CD8-positive, alpha-beta T cell (primary cell): ENCODE measurements at regions of chr17 and their contacts with region 1.

Region 1: GRCh38 chr17:49707608-49708514 is at the start of gene SLC35B1:
- DNase-seq: peak; percentile 96 to 100 (median 98)
- ATAC-seq: peak; percentile 97
- H3K4me3 ChIP-seq: peak within 1 kb of the TSS; percentile 87 to 93
- H3K4me3 Mint-ChIP-seq: peak within 1 kb of the TSS; percentile 93
- H3K27ac ChIP-seq: peak within 1 kb of the TSS; percentile 95 to 97
- H3K27ac Mint-ChIP-seq: peak within 1 kb of the TSS; percentile 98
- H3K4me1 ChIP-seq: peaks cover 21% of the 10 kb centered on the region
- H3K4me1 Mint-ChIP-seq: peaks cover 42% of the 10 kb centered on the region
- H3K27me3 ChIP-seq: no peaks in the 10 kb centered on the region
- H3K27me3 Mint-ChIP-seq: no peaks in the 10 kb centered on the region
- CTCF ChIP-seq: peak; percentile 80
- total RNA-seq, gene SLC35B1: 57.7 to 64.2 TPM

Region 2: DNA sequence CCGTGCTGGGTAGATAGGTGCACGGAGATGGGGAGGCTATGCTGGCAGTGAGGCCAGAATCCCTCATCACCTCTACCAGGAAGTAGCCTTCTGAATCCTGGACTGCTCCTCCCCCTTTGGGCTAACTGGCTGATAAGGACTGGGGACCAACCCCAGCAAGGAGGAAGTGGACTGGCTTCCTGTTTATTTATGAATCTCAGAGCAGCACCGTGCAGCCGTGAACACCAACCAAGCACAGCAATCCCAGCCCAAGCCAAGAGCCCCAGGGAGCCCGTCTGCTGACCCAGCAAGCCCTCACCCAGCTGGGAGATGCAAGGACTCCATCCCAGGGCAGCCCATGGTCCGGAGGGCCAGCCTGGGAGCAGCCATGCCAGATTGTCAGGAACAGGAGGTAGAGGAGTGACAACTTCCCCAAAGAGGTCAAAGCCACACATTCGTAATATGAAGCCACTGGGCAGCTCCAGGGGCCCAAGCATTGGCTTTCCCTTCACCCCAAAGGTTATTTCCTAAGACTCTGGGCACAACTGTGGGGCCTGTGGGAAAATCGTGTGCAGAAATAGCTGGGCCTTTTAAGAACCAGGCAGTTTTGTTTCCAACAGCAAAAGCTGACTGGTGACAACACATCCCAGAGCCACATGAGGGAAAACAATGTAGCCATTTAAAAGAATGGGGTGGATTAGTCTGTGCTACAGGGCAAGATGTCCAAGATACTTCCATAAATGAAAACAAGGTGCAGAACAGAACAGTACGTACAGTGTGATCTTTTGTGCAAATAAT is 317.1 kb before region 1 on chr17:
- CTCF ChIA-PET with region 1: no interaction called
- POLR2A ChIA-PET with region 1: no interaction called
- intact Hi-C with region 1: no loop called
- DNase-seq: peak in 2 of 9 experiments; percentile 12 to 51
- ATAC-seq: no peak
- H3K4me3 ChIP-seq: no peak overlapping the region
- H3K4me3 Mint-ChIP-seq: peak overlapping the region; percentile 65
- H3K27ac ChIP-seq: peak overlapping the region in 1 of 2 experiments; percentile 88
- H3K27ac Mint-ChIP-seq: peak overlapping the region; percentile 94
- H3K4me1 ChIP-seq: peaks cover 51% of the 10 kb centered on the region
- H3K4me1 Mint-ChIP-seq: peaks cover 68% of the 10 kb centered on the region
- H3K27me3 ChIP-seq: no peaks in the 10 kb centered on the region
- H3K27me3 Mint-ChIP-seq: no peaks in the 10 kb centered on the region
- CTCF ChIP-seq: no peak

Region 3: DNA sequence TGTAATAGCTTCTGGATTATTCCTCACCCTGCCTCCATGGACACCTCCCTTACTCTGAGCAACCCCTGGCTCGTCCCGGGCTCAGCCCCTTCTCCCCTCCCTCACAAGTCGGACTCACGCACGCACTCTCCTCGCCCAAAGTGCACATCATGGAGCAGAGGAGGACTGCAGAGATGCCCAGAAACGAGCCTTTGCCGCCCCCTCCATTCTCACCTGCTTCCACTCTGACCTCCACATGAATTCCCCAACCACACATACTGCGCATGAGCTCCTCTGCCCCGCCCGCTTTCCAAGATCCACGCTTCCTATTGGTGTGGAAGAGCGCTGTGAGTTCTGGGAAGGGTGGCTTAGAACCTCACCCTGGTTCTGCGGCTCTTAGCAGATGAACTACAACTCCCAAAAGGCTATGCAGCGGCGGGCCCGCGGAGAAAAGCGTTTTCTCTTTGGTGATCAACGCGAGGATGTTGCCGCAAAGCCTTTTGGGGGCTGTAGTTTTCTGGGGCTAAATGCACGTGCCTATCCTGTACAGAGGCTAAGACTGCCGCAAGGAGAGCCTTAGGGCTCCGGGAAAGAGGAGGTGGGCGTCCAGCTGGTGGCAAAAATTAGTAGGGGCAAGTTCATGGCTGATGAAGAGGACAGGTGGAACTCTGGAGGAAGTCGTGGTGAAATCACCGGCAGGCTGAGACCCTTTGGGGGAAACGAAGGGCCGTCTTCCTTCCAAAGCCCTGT is 293.1 kb before region 1 on chr17 and contains the start of gene PHB1:
- CTCF ChIA-PET with region 1: interaction called, 3 read pairs
- POLR2A ChIA-PET with region 1: no interaction called
- intact Hi-C with region 1: loop called (anchors 1 to 2 kb)
- DNase-seq: peak; percentile 86 to 98 (median 94)
- ATAC-seq: peak; percentile 98
- H3K4me3 ChIP-seq: peak within 1 kb of the TSS; percentile 80 to 96
- H3K4me3 Mint-ChIP-seq: peak within 1 kb of the TSS; percentile 99
- H3K27ac ChIP-seq: peak within 1 kb of the TSS; percentile 43 to 61
- H3K27ac Mint-ChIP-seq: peak within 1 kb of the TSS; percentile 93
- H3K4me1 ChIP-seq: peaks cover 12% of the 10 kb centered on the region
- H3K4me1 Mint-ChIP-seq: peaks cover 31% of the 10 kb centered on the region
- H3K27me3 ChIP-seq: no peaks in the 10 kb centered on the region
- H3K27me3 Mint-ChIP-seq: no peaks in the 10 kb centered on the region
- CTCF ChIP-seq: no peak
- total RNA-seq, gene PHB1: 26.3 to 27.0 TPM

Region 4: DNA sequence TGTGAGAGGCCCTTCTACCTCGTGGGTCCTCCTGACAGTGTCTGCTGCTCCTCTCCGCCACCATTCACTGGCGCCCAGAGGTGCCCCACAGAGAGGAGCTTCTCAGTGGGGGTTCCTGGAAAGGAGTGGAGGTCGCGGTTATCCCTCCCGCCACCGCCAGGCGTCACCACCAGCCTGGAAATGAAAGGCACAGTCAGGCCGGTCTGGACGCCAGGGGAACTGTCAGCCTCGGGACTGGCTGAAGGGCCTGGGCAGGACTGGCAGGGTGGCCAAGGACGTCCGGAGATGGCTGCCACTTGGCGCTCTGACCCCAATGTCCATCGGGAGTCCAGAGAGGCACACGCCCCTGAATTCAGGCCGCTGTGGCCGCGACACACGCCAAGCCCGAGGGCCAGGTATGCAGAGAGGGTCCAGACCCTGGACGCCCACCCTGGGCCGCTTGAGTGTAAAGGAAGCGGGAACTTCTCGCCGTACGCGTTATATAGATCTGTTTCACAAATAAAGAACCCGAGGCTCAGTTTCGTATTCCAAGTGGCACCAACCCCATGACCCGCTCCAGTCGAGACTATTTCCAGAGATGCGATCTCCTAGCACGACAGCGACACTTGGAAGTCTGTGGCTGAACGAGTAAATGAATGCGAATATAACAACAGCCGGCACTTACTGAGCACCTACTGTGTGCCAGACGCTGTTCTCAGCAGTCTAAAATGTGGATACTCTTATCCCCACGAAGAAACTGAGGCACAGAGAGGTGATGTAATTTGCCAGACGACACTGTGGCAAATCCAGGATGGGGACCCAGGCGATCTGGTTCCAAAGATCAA is 139.8 kb before region 1 on chr17:
- CTCF ChIA-PET with region 1: interaction called, 542 read pairs
- POLR2A ChIA-PET with region 1: interaction called, 4 read pairs
- intact Hi-C with region 1: loop called in 1 of 2 experiments (anchors 1 kb)
- DNase-seq: peak; percentile 69 to 91 (median 82)
- ATAC-seq: peak; percentile 59
- H3K4me3 ChIP-seq: peak overlapping the region; percentile 6 to 25
- H3K4me3 Mint-ChIP-seq: peak overlapping the region; percentile 62
- H3K27ac ChIP-seq: no peak overlapping the region
- H3K27ac Mint-ChIP-seq: no peak overlapping the region
- H3K4me1 ChIP-seq: peaks cover 12% of the 10 kb centered on the region
- H3K4me1 Mint-ChIP-seq: peaks cover 8% of the 10 kb centered on the region
- H3K27me3 ChIP-seq: no peaks in the 10 kb centered on the region
- H3K27me3 Mint-ChIP-seq: peaks cover 12% of the 10 kb centered on the region
- CTCF ChIP-seq: peak; percentile 96

Region 5: DNA sequence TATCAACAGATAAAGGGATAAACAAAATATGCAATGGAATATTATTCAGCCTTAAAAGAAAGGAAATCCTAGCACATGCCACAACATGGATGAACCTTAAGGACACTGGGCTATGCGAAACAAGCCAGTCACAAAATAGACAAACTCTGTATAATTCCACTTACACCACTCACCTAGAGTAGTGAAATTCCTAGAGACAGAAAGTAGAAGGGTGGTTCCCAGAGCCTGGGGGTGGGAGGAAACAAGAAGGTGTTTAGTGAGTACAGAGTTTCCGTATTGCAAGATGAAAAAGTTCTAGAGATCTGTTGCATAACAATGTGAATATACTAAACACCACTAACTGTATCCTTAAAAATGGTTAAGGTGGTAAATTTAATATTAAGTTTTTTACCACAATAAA is 40.0 kb before region 1 on chr17:
- CTCF ChIA-PET with region 1: no interaction called
- POLR2A ChIA-PET with region 1: no interaction called
- intact Hi-C with region 1: no loop called
- DNase-seq: peak in 1 of 9 experiments; percentile 40
- ATAC-seq: no peak
- H3K4me3 ChIP-seq: no peak overlapping the region
- H3K4me3 Mint-ChIP-seq: no peak overlapping the region
- H3K27ac ChIP-seq: no peak overlapping the region
- H3K27ac Mint-ChIP-seq: peak overlapping the region; percentile 49
- H3K4me1 ChIP-seq: peaks cover 37% of the 10 kb centered on the region
- H3K4me1 Mint-ChIP-seq: peaks cover 63% of the 10 kb centered on the region
- H3K27me3 ChIP-seq: no peaks in the 10 kb centered on the region
- H3K27me3 Mint-ChIP-seq: no peaks in the 10 kb centered on the region
- CTCF ChIP-seq: no peak

Region 6: GRCh38 chr17:49694847-49695683 is 12.8 kb before region 1 on chr17:
- CTCF ChIA-PET with region 1: interaction called, 53 read pairs
- POLR2A ChIA-PET with region 1: interaction called, 7 read pairs
- intact Hi-C with region 1: no loop called
- DNase-seq: peak; percentile 46 to 83 (median 70)
- ATAC-seq: peak; percentile 41
- H3K4me3 ChIP-seq: no peak overlapping the region
- H3K4me3 Mint-ChIP-seq: peak overlapping the region; percentile 24
- H3K27ac ChIP-seq: peak overlapping the region in 1 of 2 experiments; percentile 78
- H3K27ac Mint-ChIP-seq: peak overlapping the region; percentile 91
- H3K4me1 ChIP-seq: peaks cover 40% of the 10 kb centered on the region
- H3K4me1 Mint-ChIP-seq: peaks cover 56% of the 10 kb centered on the region
- H3K27me3 ChIP-seq: no peaks in the 10 kb centered on the region
- H3K27me3 Mint-ChIP-seq: no peaks in the 10 kb centered on the region
- CTCF ChIP-seq: peak; percentile 87

Region 7: GRCh38 chr17:49748791-49749190 is 40.9 kb after region 1 on chr17:
- CTCF ChIA-PET with region 1: interaction called, 21 read pairs
- POLR2A ChIA-PET with region 1: interaction called, 22 read pairs
- intact Hi-C with region 1: no loop called
- DNase-seq: peak in 8 of 9 experiments; percentile 26 to 85 (median 64)
- ATAC-seq: peak; percentile 82
- H3K4me3 ChIP-seq: peak overlapping the region in 1 of 2 experiments; percentile 10
- H3K4me3 Mint-ChIP-seq: peak overlapping the region; percentile 79
- H3K27ac ChIP-seq: peak overlapping the region; percentile 60 to 88
- H3K27ac Mint-ChIP-seq: peak overlapping the region; percentile 99
- H3K4me1 ChIP-seq: peaks cover 84% of the 10 kb centered on the region
- H3K4me1 Mint-ChIP-seq: peaks cover 84% of the 10 kb centered on the region
- H3K27me3 ChIP-seq: no peaks in the 10 kb centered on the region
- H3K27me3 Mint-ChIP-seq: no peaks in the 10 kb centered on the region
- CTCF ChIP-seq: no peak

Region 8: DNA sequence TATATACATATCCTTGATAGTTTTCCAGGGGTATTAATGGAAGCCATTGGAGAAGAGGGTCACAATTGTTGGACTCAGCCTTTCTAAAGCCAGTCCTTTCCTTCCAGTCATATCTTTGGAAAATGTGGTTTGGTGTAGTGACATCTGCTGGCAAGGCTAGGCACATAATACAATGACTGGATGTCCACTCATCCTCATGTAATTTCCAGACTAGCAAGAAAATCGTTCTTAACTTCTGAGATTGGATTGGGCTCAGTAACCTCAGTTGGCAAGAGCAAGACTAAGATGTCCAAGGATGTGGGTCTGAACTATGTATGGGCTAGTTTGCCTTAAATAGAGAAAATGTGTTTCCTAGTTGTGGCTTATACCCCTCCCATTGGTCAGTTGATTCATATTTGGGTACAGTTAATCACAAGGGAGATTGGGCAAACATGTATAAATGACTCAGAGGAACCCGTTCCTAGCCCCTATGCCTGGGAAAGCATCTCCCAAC is 71.9 kb after region 1 on chr17:
- CTCF ChIA-PET with region 1: interaction called, 16 read pairs
- POLR2A ChIA-PET with region 1: interaction called, 3 read pairs
- intact Hi-C with region 1: loop called in 1 of 2 experiments (anchors 1 kb)
- DNase-seq: peak in 3 of 9 experiments; percentile 24 to 65 (median 55)
- ATAC-seq: no peak
- H3K4me3 ChIP-seq: no peak overlapping the region
- H3K4me3 Mint-ChIP-seq: no peak overlapping the region
- H3K27ac ChIP-seq: no peak overlapping the region
- H3K27ac Mint-ChIP-seq: no peak overlapping the region
- H3K4me1 ChIP-seq: no peaks in the 10 kb centered on the region
- H3K4me1 Mint-ChIP-seq: peaks cover 5% of the 10 kb centered on the region
- H3K27me3 ChIP-seq: no peaks in the 10 kb centered on the region
- H3K27me3 Mint-ChIP-seq: no peaks in the 10 kb centered on the region
- CTCF ChIP-seq: peak; percentile 24

Region 9: GRCh38 chr17:49815761-49816281 is 108.0 kb after region 1 on chr17:
- CTCF ChIA-PET with region 1: interaction called, 4 read pairs
- POLR2A ChIA-PET with region 1: no interaction called
- intact Hi-C with region 1: loop called (anchors 1 kb)
- DNase-seq: no peak
- ATAC-seq: no peak
- H3K4me3 ChIP-seq: no peak overlapping the region
- H3K4me3 Mint-ChIP-seq: no peak overlapping the region
- H3K27ac ChIP-seq: peak overlapping the region in 1 of 2 experiments; percentile 6
- H3K27ac Mint-ChIP-seq: peak overlapping the region; percentile 32
- H3K4me1 ChIP-seq: peaks cover 66% of the 10 kb centered on the region
- H3K4me1 Mint-ChIP-seq: peaks cover 70% of the 10 kb centered on the region
- H3K27me3 ChIP-seq: no peaks in the 10 kb centered on the region
- H3K27me3 Mint-ChIP-seq: no peaks in the 10 kb centered on the region
- CTCF ChIP-seq: no peak

Region 10: DNA sequence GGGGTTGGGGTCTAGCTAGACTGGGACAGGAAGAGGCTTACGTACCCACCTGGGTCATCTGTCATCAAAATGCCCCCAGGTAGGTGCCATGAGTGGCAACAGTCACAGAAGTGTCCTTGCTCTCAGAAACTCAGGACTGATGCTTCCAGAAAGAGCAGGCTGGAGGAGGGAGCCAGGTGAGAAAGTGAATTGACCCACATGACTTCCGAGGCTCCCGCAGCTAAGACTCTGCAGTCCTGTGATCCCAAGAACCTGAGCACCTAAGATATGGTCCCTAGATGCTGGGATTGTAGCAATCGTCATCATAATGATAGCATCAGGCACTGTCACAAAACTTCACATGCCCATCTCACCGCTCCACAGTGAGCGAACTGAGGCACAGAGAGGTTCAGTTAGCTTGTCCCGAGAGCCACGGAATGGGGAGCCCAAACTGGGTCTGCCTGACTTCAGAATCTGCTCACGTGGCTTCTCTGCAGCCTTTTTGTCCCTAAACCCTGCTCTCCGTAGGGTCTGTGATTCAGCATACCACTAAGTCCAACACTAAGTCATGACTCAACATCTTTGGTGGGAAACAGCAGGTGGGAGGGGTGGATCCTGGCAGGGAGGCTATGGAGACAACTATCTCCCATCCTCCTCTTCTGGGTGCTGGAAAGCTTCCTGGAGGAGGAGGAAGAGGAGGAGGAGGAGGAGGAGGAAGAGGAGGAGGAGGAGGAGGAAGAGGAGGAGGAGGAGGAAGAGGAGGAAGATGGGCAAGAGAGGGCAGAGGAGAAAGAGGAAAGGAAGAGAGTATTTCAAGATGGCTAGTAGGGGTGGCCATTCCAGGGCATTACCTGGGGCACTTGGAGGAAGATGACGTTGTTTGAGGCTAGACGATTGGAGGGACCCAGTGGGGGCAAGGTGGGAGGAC is 205.6 kb after region 1 on chr17:
- CTCF ChIA-PET with region 1: no interaction called
- POLR2A ChIA-PET with region 1: no interaction called
- intact Hi-C with region 1: no loop called
- DNase-seq: no peak
- ATAC-seq: no peak
- H3K4me3 ChIP-seq: no peak overlapping the region
- H3K4me3 Mint-ChIP-seq: no peak overlapping the region
- H3K27ac ChIP-seq: no peak overlapping the region
- H3K27ac Mint-ChIP-seq: no peak overlapping the region
- H3K4me1 ChIP-seq: no peaks in the 10 kb centered on the region
- H3K4me1 Mint-ChIP-seq: peaks cover 10% of the 10 kb centered on the region
- H3K27me3 ChIP-seq: peaks cover 3 to 16% of the 10 kb centered on the region in 2 experiments
- H3K27me3 Mint-ChIP-seq: peaks cover 56% of the 10 kb centered on the region
- CTCF ChIP-seq: no peak